Adrenal gland (tissue), 19 donors: ENCODE measurements at regions of chr12 and their contacts with region 1.

Region 1: DNA sequence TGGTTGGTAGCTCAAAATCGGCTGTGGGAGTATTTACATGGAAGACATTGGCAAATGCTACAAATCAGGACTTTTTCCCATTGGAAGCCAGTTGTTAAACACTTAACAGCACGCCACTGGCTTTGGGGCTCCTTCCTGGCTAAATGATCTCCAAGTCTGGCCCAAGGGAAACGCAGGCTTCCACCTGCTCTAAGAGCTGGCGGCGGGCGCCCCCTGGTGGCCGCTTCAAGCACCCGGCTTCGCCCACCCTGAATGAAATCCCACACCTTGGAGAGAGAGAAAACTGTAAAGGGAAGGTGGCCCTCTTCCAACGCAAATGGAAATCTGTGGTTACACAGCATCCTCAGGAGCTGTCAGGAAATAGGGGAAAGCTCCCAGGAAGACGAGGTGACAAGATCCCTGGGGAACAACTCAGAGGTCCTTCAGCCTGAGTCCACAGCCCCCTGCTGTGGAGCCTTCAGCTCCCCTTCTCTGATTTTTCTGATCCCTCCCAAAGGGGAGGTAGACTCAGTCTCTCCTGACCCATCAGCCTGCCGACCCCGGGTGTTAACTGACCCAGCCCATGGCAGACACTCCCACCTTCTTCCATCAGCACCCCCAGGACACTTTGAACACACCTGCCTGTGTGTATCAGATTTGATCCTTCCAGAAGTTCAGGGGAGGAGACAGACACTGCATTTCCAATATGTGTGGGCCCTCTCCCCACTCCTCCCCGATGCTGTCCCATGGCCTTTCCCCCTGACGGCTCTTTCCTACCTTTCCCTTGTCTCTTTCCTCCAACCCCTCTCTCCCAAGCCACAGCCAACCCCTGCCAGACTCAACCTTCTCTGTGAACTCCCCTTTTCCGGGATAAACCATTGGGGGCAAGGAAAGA is 15.4 kb downstream of the SELPLG start:
- DNase-seq: peak; percentile 79 to 90 (median 87)
- H3K4me3 ChIP-seq: no peak overlapping the region
- H3K27ac ChIP-seq: peak overlapping the region in 1 of 5 donors; percentile 43
- H3K4me1 ChIP-seq: peaks cover 5 to 22% of the 10 kb centered on the region in 2 donors
- H3K27me3 ChIP-seq: no peaks in the 10 kb centered on the region
- CTCF ChIP-seq: peak; percentile 91 to 99 (median 94)
- POLR2A ChIP-seq: no peak

Region 2: GRCh38 chr12:108514973-108515814 is 103.1 kb before region 1 on chr12 and contains the start of gene FICD:
- intact Hi-C with region 1: loop called in 1 of 2 experiments (anchors 10 kb)
- DNase-seq: peak; percentile 99 to 100 (median 100)
- H3K4me3 ChIP-seq: peak within 1 kb of the TSS; percentile 54 to 89 (median 63)
- H3K27ac ChIP-seq: peak within 1 kb of the TSS in 4 of 5 donors; percentile 38 to 89 (median 60)
- H3K4me1 ChIP-seq: peaks cover 24 to 25% of the 10 kb centered on the region in 2 donors
- H3K27me3 ChIP-seq: no peaks in the 10 kb centered on the region
- CTCF ChIP-seq: no peak
- POLR2A ChIP-seq: peak in 1 of 2 donors; percentile 51
- total RNA-seq, gene FICD: 6.2 to 77.5 (median 13.3) TPM

Region 3: DNA sequence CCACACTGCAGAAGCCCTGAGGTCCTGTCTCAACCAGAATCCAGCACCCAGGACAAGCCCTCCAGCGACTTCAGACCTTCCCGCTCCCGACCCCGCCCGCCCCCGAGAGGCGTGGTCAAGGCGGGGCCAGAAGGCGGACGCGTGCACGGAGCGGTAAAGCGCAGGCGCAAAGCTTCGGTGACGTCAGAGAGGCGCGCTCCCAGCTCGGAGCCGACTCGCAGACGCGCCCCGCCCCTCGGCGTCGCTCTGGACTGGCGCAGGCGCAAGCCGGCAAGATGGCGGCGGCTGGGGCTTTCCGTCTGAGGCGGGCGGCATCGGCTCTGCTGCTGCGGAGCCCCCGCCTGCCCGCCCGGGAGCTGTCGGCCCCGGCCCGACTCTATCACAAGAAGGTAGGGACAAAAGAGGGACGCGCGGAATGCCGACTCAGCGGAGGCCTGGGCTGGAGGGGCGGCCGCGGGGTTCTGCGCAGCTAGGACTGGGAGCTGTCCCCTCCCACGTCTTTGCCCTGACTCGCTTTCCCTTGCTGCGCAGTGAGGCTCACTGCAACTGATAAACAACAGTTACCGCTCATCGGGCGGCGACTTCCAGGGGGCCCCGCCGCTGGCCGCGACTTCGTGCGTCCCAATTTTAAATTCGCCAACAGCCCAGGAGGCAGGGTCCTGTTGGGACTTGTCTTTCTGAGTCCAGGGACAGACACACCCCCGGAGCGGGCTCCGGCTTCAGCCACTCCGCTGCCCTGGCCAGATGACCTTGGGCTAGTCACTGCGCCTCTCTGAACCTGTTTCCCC is 55.8 kb before region 1 on chr12 and contains the start of gene ISCU:
- intact Hi-C with region 1: loop called (anchors 2 to 5 kb)
- DNase-seq: peak; percentile 97 to 99 (median 98)
- H3K4me3 ChIP-seq: peak within 1 kb of the TSS; percentile 56 to 99 (median 90)
- H3K27ac ChIP-seq: peak within 1 kb of the TSS; percentile 90 to 98 (median 94)
- H3K4me1 ChIP-seq: peaks cover 25 to 62% of the 10 kb centered on the region in 2 donors
- H3K27me3 ChIP-seq: no peaks in the 10 kb centered on the region
- CTCF ChIP-seq: no peak
- POLR2A ChIP-seq: peak; percentile 96 to 97
- total RNA-seq, gene ISCU: 272 to 1,219 (median 420) TPM

Region 4: GRCh38 chr12:108821407-108822397 is 203.4 kb after region 1 on chr12:
- intact Hi-C with region 1: no loop called
- DNase-seq: peak in 1 of 7 donors; percentile 34
- H3K4me3 ChIP-seq: no peak overlapping the region
- H3K27ac ChIP-seq: peak overlapping the region in 4 of 5 donors; percentile 22 to 94 (median 60)
- H3K4me1 ChIP-seq: peaks cover 28 to 76% of the 10 kb centered on the region in 2 donors
- H3K27me3 ChIP-seq: no peaks in the 10 kb centered on the region
- CTCF ChIP-seq: no peak
- POLR2A ChIP-seq: no peak

Region 5: DNA sequence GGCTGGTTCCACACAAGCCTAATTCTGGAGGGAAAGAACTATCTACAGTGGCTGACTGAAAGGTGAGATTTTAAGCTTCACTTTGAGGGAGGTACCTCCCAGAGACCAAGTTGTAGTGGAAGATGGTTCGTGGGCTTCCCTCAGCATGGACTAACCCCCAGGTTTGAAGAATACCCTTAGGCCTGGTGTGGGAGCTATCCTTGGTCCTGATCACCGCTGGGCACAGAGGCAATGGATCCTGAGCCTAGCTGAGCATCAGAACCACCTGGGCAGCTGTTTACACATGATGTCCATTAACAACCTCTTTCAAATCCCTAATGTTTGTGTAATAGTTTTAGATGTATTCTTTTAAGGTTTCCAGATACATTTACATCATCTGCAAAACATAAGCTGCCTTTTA is 271.9 kb after region 1 on chr12:
- intact Hi-C with region 1: no loop called
- DNase-seq: no peak
- H3K4me3 ChIP-seq: no peak overlapping the region
- H3K27ac ChIP-seq: no peak overlapping the region
- H3K4me1 ChIP-seq: no peaks in the 10 kb centered on the region
- H3K27me3 ChIP-seq: no peaks in the 10 kb centered on the region
- CTCF ChIP-seq: no peak
- POLR2A ChIP-seq: no peak